ENCODE measurements at regions of chr18 and their contacts with region 1.

Region 1: GRCh38 chr18:79523736-79524180 is 128.0 kb downstream of the NFATC1 start:
- DNase-seq: peak; percentile 66
- H3K4me3 Mint-ChIP-seq: peak overlapping the region; percentile 77
- H3K27ac Mint-ChIP-seq: peak overlapping the region; percentile 98
- H3K4me1 Mint-ChIP-seq: peaks cover 56% of the 10 kb centered on the region
- H3K27me3 Mint-ChIP-seq: no peaks in the 10 kb centered on the region

Region 2: DNA sequence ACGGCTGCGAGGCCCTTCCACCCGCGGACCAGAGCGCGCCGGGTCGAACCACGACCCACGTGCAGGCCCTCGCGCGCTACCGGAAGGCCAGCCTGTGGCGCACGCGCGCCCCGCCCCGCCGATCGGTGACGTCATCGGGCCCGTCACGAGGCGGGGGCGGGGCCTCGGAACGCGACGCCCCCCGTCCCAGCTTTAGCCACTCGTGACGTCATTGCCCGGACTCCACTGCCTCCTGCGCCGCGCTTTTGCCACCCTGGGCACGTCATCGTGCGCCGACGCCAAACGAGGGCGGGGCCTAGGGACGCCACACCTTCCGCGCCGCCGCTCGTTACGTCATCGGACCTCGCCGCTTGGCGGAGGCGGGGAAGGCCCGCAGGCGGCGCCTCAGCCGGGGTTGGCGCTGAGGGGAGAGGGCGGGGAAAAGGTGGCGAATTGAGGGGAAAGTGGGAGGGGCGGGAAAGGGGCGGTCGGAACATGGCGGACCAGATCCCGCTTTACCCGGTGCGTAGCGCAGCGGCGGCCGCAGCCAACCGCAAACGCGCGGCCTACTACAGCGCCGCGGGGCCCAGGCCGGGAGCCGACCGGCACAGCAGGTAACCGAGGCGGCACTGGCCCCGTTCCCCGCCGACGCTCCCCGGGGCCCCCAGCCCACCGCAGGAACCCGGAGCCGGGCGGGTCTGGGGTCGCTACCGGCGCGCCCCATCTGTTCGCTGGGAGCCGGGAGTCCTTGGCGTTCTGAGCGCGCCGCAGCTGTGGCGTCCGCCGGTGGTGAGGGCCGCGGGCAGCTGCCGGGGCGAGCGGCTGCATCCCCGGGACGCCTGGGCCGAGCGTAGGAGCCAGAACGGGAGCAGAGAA is 454.6 kb before region 1 on chr18 and contains the start of gene ATP9B:
- intact Hi-C with region 1: loop called (anchors 5 kb)
- DNase-seq: peak; percentile 98
- H3K4me3 Mint-ChIP-seq: peak within 1 kb of the TSS; percentile 87
- H3K27ac Mint-ChIP-seq: peak within 1 kb of the TSS; percentile 98
- H3K4me1 Mint-ChIP-seq: peaks cover 26% of the 10 kb centered on the region
- H3K27me3 Mint-ChIP-seq: peaks cover 20% of the 10 kb centered on the region
- total RNA-seq, gene ATP9B: 27.6 and 29.8 TPM in 2 replicates

Region 3: GRCh38 chr18:79393635-79394533 is 129.9 kb before region 1 on chr18:
- intact Hi-C with region 1: loop called (anchors 1 kb)
- DNase-seq: no peak
- H3K4me3 Mint-ChIP-seq: peak overlapping the region; percentile 85
- H3K27ac Mint-ChIP-seq: peak overlapping the region; percentile 89
- H3K4me1 Mint-ChIP-seq: peaks cover 11% of the 10 kb centered on the region
- H3K27me3 Mint-ChIP-seq: peaks cover 33% of the 10 kb centered on the region

Region 4: GRCh38 chr18:79447703-79448367 is 75.9 kb before region 1 on chr18:
- intact Hi-C with region 1: loop called (anchors 5 kb)
- DNase-seq: no peak
- H3K4me3 Mint-ChIP-seq: no peak overlapping the region
- H3K27ac Mint-ChIP-seq: peak overlapping the region; percentile 52
- H3K4me1 Mint-ChIP-seq: peaks cover 7% of the 10 kb centered on the region
- H3K27me3 Mint-ChIP-seq: no peaks in the 10 kb centered on the region

Region 5: GRCh38 chr18:79679111-79679872 is 155.5 kb after region 1 on chr18 and contains the start of gene CTDP1:
- intact Hi-C with region 1: loop called (anchors 1 kb)
- DNase-seq: peak; percentile 98
- H3K4me3 Mint-ChIP-seq: peak within 1 kb of the TSS; percentile 92
- H3K27ac Mint-ChIP-seq: peak within 1 kb of the TSS; percentile 98
- H3K4me1 Mint-ChIP-seq: peaks cover 57% of the 10 kb centered on the region
- H3K27me3 Mint-ChIP-seq: no peaks in the 10 kb centered on the region
- total RNA-seq, gene CTDP1: 42.0 and 43.3 TPM in 2 replicates

Measured in activated T-helper 2 cell treated with anti-CD3 and anti-CD28 coated beads, Interferon-gamma antibody, Interleukin-2, Interleukin-4, amounts not matched to agents 10 μg/mL and 5 μg/mL and 100 μg/mL, durations not matched to agents 14 hours and 24 hours and 36 hours (primary cell).